Posterior cingulate gyrus (tissue), 11 donors: ENCODE measurements at regions of chr16 and their contacts with region 1.

Region 1: GRCh38 chr16:47928008-47928407 is 227.8 kb downstream of the ABCC12 start:
- DNase-seq: no peak

Region 2: GRCh38 chr16:47533744-47534292 is 394.2 kb before region 1 on chr16:
- intact Hi-C with region 1: loop called (anchors 5 kb)
- DNase-seq: no peak

Region 3: DNA sequence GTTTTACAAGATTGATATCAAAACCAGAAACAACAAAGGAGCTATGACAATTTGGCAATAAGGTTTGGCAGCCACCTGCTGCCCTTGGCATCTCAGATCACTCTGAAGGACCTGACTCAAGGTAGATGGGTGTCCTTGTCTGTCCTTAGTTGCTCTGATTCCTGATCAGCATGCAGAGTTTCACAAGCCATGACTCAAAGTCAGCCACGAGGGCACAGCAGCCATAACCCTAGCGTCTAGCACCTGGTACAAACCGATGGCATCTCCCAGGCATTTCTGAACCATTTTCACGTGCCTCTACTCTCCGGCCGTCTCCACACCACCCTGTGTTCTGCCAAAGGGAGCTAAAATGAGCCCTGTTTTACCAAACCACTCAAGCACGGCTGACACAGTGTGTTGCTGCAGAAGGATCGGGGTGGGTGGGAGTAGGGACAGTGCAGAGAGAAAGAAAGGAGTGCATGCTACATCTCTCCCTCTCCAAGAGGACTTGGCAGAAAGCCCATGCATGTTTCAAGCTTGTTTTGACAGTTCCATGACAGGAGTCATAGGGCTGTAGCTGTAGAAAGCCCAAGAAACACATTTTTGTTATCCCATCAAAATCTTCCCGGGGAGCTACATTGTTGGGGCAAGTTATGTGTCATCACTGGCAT is 69.5 kb before region 1 on chr16:
- intact Hi-C with region 1: no loop called
- DNase-seq: no peak

Region 4: GRCh38 chr16:48029768-48030167 is 101.8 kb after region 1 on chr16:
- intact Hi-C with region 1: no loop called
- DNase-seq: no peak